Activated CD8-positive, alpha-beta memory T cell treated with anti-CD3 and anti-CD28 coated beads, Interleukin-2, amount 10 ng/mL, durations not matched to agents 7 days and 5 days (primary cell): ENCODE measurements at regions of chr11 and their contacts with region 1.

Region 1: DNA sequence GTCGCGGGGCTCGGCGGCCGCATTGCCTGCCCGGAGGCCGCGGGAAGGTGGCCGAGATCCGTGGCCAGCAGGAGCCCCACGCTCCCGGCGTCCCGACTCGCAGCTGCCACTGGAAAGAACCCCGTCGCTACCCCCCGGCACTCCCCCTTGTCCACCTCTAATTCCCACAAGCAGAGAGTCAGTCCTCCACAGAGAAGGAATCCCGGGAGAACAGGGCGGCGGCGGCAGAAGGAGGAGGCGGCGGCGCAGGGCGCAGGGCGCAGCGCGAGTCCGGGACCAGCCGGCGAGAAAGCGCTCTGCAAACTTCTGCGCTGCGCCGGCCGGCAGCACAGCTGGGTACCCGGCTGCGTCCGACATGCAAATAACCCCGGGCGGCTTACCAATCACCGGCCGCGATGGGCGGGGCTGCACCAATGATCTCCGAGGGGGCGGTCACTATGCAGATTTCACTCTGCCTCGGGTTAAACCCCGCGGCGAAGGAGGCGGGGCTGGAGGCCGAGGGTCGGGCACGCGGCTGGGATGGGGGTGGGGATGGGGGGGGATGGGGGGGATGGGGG is at the start of gene ABTB2:
- DNase-seq: peak; percentile 99
- ATAC-seq: peak; percentile 93
- H3K4me3 Mint-ChIP-seq: peak within 1 kb of the TSS; percentile 75
- H3K27ac Mint-ChIP-seq: peak within 1 kb of the TSS; percentile 83
- H3K4me1 Mint-ChIP-seq: peaks cover 28% of the 10 kb centered on the region
- H3K27me3 Mint-ChIP-seq: peaks cover 62% of the 10 kb centered on the region
- total RNA-seq, gene ABTB2: 3.8 to 16.8 TPM

Region 2: DNA sequence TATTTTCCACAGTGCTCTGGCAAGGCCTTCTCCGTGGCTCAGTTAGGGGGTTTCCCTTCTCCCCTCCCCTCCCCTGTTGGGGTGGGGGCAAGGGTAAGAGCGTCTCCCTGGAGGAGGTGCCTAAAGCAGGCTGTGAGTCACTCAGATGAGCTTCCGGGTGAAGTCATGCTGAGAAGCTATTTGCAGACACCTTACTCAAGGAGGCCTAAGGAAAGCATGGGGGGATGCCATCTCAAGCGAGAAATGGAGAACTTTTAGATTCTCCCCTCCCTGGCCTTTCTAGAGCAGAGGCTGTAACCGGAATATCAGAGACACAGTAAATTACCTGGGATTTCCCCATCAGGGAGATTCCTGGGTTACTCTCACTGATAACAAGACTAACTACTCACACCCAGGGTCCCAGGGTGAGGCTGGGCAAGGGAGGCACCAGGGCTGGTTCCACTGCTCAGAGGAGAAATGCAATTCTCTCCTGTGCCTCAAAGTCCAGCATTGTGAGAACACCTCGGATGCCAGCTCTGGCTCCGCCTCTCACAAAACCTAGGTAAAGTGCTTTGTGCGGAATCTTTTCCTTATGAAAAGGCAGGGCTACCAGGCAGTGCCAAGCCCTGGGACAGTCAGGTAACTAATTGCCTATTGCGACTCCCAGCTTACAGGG is 123.6 kb before region 1 on chr11:
- CTCF ChIA-PET with region 1: interaction called, 11 read pairs
- DNase-seq: peak; percentile 86
- ATAC-seq: peak; percentile 86
- H3K4me3 Mint-ChIP-seq: no peak overlapping the region
- H3K27ac Mint-ChIP-seq: peak overlapping the region; percentile 80
- H3K4me1 Mint-ChIP-seq: peaks cover 45% of the 10 kb centered on the region
- H3K27me3 Mint-ChIP-seq: peaks cover 24% of the 10 kb centered on the region

Region 3: DNA sequence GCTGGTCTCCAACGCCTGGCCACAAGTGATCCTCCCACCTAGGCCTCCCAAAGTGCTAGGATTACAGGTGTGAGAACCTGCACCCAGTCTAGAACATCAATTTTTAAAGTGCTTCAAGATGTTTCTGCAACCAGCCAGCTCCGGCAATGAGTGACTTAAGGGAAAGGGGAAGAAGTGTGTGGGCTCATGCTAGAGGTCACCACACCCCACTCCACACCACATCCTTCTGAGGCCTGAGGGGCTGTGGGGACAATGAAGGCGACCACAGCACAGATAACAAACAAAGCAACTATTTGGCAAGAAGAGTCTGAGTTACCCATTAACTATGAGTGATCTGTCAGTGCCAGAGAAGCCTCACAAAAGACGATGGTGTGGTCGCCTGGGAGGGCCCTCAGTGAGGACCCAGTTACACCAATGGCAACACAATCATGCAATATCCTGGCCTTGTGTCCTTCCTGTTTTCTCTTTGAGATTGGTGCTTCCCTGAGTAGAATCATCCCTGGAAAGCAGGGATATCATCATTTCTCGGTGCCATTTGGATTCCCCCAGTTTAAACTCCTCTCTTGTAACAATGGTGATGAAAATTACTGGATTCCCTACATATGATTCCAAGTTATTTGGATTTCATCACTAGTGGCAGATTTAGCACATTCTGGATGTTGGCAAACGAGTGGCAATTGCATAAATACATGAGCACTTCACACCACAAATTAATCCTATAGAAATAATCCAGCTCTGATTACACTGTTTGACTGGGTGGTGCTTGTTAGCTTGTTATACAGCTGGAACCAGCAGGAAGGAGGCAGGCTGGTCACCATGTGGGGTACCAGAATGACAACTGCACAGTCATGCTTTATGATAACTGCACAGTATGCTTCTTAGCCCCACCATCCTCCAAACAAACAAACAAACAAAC is 18.4 kb before region 1 on chr11:
- CTCF ChIA-PET with region 1: interaction called, 36 read pairs
- DNase-seq: peak; percentile 74
- ATAC-seq: peak; percentile 57
- H3K4me3 Mint-ChIP-seq: peak overlapping the region; percentile 1
- H3K27ac Mint-ChIP-seq: peak overlapping the region; percentile 68
- H3K4me1 Mint-ChIP-seq: peaks cover 31% of the 10 kb centered on the region
- H3K27me3 Mint-ChIP-seq: peaks cover 11% of the 10 kb centered on the region

Region 4: GRCh38 chr11:34344768-34345539 is 12.8 kb before region 1 on chr11:
- CTCF ChIA-PET with region 1: interaction called, 36 read pairs
- DNase-seq: peak; percentile 49
- ATAC-seq: peak; percentile 20
- H3K4me3 Mint-ChIP-seq: no peak overlapping the region
- H3K27ac Mint-ChIP-seq: no peak overlapping the region
- H3K4me1 Mint-ChIP-seq: peaks cover 21% of the 10 kb centered on the region
- H3K27me3 Mint-ChIP-seq: peaks cover 18% of the 10 kb centered on the region